Brain microvascular endothelial cell (primary cell): ENCODE measurements at regions of chr4 and their contacts with region 1.

Region 1: DNA sequence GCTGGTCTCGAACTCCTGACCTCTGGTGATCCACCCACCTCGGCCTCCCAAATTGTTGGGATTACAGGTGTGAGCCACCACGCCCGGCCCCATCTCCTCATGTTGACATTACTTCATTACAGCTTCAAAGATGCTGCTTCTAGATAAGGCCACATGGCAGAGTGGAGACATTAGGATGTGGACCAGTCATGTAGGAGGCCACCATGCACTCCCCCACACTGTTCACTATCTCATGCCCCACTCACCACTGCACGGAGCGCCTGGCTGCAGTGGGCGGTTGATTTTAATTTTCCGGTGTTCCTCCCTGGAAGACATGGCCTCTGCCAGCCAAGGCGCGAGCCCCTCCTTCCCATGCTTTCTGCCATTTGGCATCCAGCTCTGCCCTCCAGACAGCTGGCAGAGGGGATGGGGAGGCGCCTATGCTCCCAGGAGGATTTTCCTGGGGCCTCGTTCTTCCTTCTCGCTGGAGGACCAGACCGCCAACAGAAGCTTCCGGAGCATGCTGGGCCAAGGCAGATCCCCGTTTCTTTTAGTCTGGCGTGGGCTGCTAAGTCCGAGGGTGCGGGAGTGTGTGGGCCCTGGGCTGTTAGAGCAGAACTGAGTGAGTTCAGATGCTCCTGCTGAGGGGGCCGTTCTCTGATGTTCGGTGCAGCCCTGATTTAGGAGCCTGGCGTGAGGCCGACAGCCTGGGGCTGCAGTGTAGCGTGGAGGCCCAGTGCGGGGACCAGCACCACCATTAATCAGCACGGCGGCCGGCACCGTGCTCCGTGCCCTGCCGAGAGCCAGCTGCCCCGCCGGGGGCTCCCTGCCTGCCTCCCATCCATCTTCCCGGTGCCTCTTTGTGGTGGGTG is 93.1 kb downstream of the SORCS2 start:
- DNase-seq: no peak
- H3K4me3 ChIP-seq: no peak overlapping the region
- H3K27ac ChIP-seq: no peak overlapping the region
- H3K27me3 ChIP-seq: no peaks in the 10 kb centered on the region
- CTCF ChIP-seq: no peak

Region 2: GRCh38 chr4:7124689-7125442 is 160.6 kb before region 1 on chr4:
- in situ Hi-C with region 1: no loop called
- DNase-seq: peak; percentile 90
- H3K4me3 ChIP-seq: no peak overlapping the region
- H3K27ac ChIP-seq: no peak overlapping the region
- H3K27me3 ChIP-seq: peaks cover 2% of the 10 kb centered on the region
- CTCF ChIP-seq: peak; percentile 12

Region 3: GRCh38 chr4:7223541-7223940 is 61.9 kb before region 1 on chr4:
- in situ Hi-C with region 1: loop called (anchors 5 kb)
- DNase-seq: no peak
- H3K4me3 ChIP-seq: no peak overlapping the region
- H3K27ac ChIP-seq: no peak overlapping the region
- H3K27me3 ChIP-seq: no peaks in the 10 kb centered on the region
- CTCF ChIP-seq: no peak

Region 4: GRCh38 chr4:7434766-7435150 is 149.3 kb after region 1 on chr4 and contains the start of gene PSAPL1:
- in situ Hi-C with region 1: no loop called
- DNase-seq: peak; percentile 11
- H3K4me3 ChIP-seq: no peak within 1 kb of the TSS
- H3K27ac ChIP-seq: no peak within 1 kb of the TSS
- H3K27me3 ChIP-seq: peaks cover 2% of the 10 kb centered on the region
- CTCF ChIP-seq: no peak

Region 5: GRCh38 chr4:7462509-7462971 is 177.1 kb after region 1 on chr4:
- in situ Hi-C with region 1: no loop called
- DNase-seq: no peak
- H3K4me3 ChIP-seq: no peak overlapping the region
- H3K27ac ChIP-seq: no peak overlapping the region
- H3K27me3 ChIP-seq: no peaks in the 10 kb centered on the region
- CTCF ChIP-seq: no peak